ENCODE measurements at regions of chr1 and their contacts with region 1.

Region 1: DNA sequence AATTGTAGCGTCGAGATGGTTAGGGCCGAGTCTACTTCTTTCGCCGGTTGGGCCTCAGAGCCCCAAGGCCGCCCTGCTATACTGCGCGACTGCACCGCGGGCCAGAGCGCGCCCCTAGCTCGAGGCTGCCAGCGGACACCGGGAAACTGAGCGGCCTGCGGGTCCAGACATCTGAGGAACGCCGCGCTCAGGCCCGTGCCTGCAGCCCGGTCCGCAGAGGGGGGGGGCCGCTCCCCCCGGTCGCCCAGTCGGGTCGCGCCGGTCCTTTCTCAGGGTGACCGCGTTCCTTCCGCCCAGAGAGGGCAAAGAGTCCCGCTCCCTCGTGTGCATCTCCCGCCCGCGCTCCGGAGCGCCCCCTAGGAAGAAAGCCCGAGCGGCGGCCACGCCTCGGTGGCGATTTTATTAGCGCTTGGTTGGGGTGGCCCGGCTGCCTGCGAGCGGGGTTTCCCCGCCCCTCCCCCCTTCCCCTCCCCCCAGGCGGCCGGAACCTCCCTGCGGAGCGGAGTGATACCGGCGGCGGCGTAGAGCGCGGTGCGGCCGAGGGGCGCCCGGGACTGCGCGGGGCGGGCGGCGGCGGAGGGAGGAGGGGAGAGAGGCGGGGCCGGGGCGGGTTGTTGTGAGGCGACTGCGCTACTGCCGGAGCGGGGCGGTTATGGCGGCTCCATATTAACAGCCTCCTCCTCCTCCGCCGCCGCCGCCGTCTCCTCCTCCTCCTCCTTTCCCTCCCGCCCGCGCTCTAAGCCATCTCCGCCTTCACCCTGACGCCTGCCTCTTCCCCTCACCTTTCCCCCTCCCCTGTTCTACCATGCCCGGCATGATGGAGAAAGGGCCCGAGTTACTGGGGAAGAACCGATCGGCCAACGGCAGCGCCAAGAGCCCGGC is at the start of gene RCOR3:
- DNase-seq: peak; percentile 96
- H3K4me3 Mint-ChIP-seq: peak within 1 kb of the TSS; percentile 96
- H3K27ac Mint-ChIP-seq: peak within 1 kb of the TSS; percentile 97
- H3K4me1 Mint-ChIP-seq: peaks cover 13% of the 10 kb centered on the region
- H3K27me3 Mint-ChIP-seq: no peaks in the 10 kb centered on the region
- total RNA-seq, gene RCOR3: 38.0 and 39.8 TPM in 2 replicates

Region 2: GRCh38 chr1:210908257-210908656 is 350.7 kb before region 1 on chr1:
- intact Hi-C with region 1: no loop called
- DNase-seq: no peak
- H3K4me3 Mint-ChIP-seq: no peak overlapping the region
- H3K27ac Mint-ChIP-seq: no peak overlapping the region
- H3K4me1 Mint-ChIP-seq: no peaks in the 10 kb centered on the region
- H3K27me3 Mint-ChIP-seq: peaks cover 7% of the 10 kb centered on the region

Region 3: DNA sequence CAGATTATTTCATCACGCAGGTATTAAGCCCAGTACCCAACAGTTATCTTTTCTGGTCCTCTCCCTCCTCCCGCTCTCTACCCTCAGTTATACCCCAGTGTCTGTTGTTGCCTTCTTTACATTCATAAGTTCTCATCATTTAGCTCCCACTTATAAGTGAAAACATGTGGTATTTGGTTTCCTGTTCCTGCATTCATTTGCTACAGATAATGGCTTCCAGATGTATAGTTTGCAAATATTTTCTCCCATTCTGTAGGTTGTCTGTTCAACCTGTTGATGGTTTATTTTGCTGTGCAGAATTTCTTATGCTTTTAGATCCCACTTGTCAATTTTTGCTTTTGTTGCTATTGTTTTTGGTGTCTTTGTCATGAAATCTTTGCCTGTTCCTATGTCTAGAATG is 104.0 kb before region 1 on chr1:
- intact Hi-C with region 1: no loop called
- DNase-seq: no peak
- H3K4me3 Mint-ChIP-seq: no peak overlapping the region
- H3K27ac Mint-ChIP-seq: no peak overlapping the region
- H3K4me1 Mint-ChIP-seq: no peaks in the 10 kb centered on the region
- H3K27me3 Mint-ChIP-seq: peaks cover 7% of the 10 kb centered on the region

Region 4: GRCh38 chr1:211229365-211229759 is 29.6 kb before region 1 on chr1:
- intact Hi-C with region 1: loop called (anchors 1 kb)
- DNase-seq: no peak
- H3K4me3 Mint-ChIP-seq: peak overlapping the region; percentile 68
- H3K27ac Mint-ChIP-seq: peak overlapping the region; percentile 56
- H3K4me1 Mint-ChIP-seq: peaks cover 20% of the 10 kb centered on the region
- H3K27me3 Mint-ChIP-seq: peaks cover 4% of the 10 kb centered on the region

Region 5: DNA sequence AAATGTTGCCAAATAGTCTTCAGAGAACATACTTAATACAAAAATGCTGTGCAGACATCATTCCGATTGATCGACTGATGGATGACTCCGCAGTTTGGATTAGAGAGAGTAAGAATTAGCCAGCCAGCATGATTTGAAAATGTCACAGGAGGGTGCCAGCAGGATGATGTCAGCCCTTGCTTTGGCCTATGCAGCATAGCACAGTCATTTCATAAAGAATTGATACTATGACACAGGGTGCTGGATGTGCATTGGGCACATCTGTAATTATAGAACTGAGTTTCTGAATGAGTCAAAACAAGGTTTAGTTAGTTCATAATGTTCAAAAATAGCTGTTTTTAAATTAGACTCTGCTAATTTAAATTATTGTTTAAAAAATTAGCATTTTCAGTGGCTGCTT is 46.0 kb after region 1 on chr1:
- intact Hi-C with region 1: loop called (anchors 2 kb)
- DNase-seq: no peak
- H3K4me3 Mint-ChIP-seq: no peak overlapping the region
- H3K27ac Mint-ChIP-seq: peak overlapping the region; percentile 71
- H3K4me1 Mint-ChIP-seq: peaks cover 16% of the 10 kb centered on the region
- H3K27me3 Mint-ChIP-seq: no peaks in the 10 kb centered on the region

Region 6: GRCh38 chr1:211578640-211579433 is 319.8 kb after region 1 on chr1 and contains the start of gene SLC30A1:
- intact Hi-C with region 1: loop called (anchors 1 kb)
- DNase-seq: peak; percentile 100
- H3K4me3 Mint-ChIP-seq: peak within 1 kb of the TSS; percentile 92
- H3K27ac Mint-ChIP-seq: peak within 1 kb of the TSS; percentile 87
- H3K4me1 Mint-ChIP-seq: peaks cover 33% of the 10 kb centered on the region
- H3K27me3 Mint-ChIP-seq: peaks cover 4% of the 10 kb centered on the region
- total RNA-seq, gene SLC30A1: 8.5 and 9.0 TPM in 2 replicates

Measured in activated CD4-positive, alpha-beta T cell treated with anti-CD3 and anti-CD28 coated beads, Interleukin-2, amount 10 ng/mL, durations not matched to agents 24 days and 14 days (primary cell).